Right ventricle myocardium inferior (tissue), 1 donor: ENCODE measurements at regions of chr14 and their contacts with region 1.

Region 1: DNA sequence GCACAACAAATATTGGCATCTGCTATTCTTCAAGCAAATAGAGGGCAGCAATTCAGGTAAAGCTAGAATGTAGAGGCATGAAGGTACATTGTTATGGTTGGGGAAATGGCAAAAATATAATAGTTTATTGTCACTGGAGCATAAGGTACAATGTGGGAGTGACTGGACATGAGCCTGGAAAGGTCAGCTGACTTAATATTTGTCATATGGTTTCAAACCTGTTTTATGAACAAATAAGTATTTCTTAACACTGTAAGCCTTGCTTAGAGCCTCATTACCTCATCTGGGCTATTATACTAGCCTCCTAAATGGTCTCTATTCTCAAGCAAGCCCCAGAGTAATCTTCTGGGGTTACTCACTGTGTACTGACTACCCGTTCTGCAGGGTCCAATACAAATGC is 33.7 kb downstream of the FAM177A1 start:
- DNase-seq: no peak
- ATAC-seq: no peak

Region 2: DNA sequence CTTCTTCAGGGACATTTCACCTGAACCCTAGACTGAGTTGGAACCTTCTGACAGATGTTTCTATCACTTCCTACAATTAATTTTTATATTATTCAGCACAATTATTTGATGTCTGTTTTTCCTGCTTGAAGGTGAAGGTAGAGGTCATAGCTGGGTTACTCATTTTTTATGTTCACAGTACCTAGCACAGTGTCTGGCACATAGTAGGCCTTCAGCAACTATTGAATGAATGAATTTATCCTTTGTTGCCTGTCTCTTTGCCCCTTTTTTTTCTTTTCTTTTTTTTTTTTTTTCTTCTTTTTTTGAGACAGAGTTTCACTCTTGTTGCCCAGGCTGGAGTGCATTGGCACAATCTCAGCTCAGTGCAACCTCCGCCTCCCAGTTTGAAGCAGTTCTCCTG is 63.2 kb before region 1 on chr14:
- intact Hi-C with region 1: loop called (anchors 10 kb)
- DNase-seq: no peak
- ATAC-seq: no peak